ENCODE measurements at regions of chr6 and their contacts with region 1.

Region 1: DNA sequence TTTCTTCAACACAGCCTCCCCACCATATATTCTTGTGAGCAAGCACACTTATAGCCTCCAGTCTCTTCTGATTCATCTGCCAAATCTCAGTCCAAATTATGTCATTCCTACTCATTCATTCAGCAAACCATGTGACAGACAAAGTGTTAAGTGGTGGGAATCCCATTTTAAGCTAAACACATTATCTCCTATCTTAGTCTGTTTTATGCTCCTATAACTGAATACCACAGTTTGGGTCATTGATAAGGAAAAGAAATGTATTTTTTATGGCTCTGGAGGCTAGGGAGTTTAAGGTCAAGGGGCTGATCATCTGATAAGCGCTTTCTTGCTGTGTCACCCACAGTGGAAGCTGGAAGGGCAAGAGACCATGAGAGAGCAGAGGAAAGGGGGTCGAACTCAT is 23.9 kb upstream of the SMIM13 start:
- DNase-seq: no peak
- H3K4me3 ChIP-seq: no peak overlapping the region
- CTCF ChIP-seq: no peak
- POLR2A ChIP-seq: no peak

Region 2: GRCh38 chr6:10954590-10955010 is 115.2 kb before region 1 on chr6:
- intact Hi-C with region 1: loop called (anchors 1 kb)
- DNase-seq: peak; percentile 41 to 87
- H3K4me3 ChIP-seq: no peak overlapping the region
- CTCF ChIP-seq: no peak
- POLR2A ChIP-seq: no peak